IMR-90 (cell line): ENCODE measurements at regions of chr16 and their contacts with region 1.

Region 1: DNA sequence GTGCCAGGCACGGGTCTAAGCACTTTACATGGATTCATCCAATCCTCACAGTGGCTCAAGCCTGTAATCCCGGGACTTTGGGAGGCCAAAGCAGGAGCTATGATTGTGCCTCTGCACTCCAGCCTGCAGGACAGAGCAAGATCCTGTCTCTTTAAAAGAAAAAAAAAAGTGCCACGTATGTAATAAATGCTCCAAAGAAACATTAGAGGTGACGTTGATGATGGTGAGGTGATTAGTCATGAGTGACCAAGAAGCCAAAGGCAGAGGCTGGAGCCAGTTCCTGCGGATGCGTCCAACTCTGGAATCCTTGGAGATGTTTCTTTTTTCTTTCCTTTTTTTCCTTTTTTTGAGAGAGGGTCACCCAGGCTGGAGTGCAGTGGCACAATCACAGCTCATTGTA is 59.4 kb upstream of the SIAH1 start:
- DNase-seq: peak; percentile 94
- ATAC-seq: peak; percentile 87
- H3K4me3 ChIP-seq: no peak overlapping the region; the same call in 1 of the 2 replicates
- H3K27ac ChIP-seq: peak overlapping the region; percentile 85
- H3K4me1 ChIP-seq: peaks cover 6% of the 10 kb centered on the region
- H3K27me3 ChIP-seq: no peaks in the 10 kb centered on the region
- CTCF ChIP-seq: no peak
- POLR2A ChIP-seq: peak; percentile 44; the same call in 1 of the 2 replicates
- RAD21 ChIP-seq: no peak

Region 2: GRCh38 chr16:47110939-47111338 is 1333.6 kb before region 1 on chr16:
- CTCF ChIA-PET with region 1: no interaction called
- POLR2A ChIA-PET with region 1: interaction called, 15 read pairs
- dilution Hi-C with region 1: no loop called
- in situ Hi-C with region 1: no loop called
- intact Hi-C with region 1: no loop called
- DNase-seq: no peak
- ATAC-seq: no peak
- H3K4me3 ChIP-seq: no peak overlapping the region
- H3K27ac ChIP-seq: no peak overlapping the region
- H3K4me1 ChIP-seq: no peaks in the 10 kb centered on the region
- H3K27me3 ChIP-seq: no peaks in the 10 kb centered on the region
- CTCF ChIP-seq: no peak
- POLR2A ChIP-seq: no peak
- RAD21 ChIP-seq: no peak

Region 3: GRCh38 chr16:48409839-48410611 is 34.5 kb before region 1 on chr16:
- CTCF ChIA-PET with region 1: interaction called, 3 read pairs
- POLR2A ChIA-PET with region 1: no interaction called
- dilution Hi-C with region 1: no loop called
- in situ Hi-C with region 1: no loop called
- intact Hi-C with region 1: loop called (anchors 2 kb)
- DNase-seq: peak; percentile 96
- ATAC-seq: peak; percentile 93
- H3K4me3 ChIP-seq: no peak overlapping the region
- H3K27ac ChIP-seq: peak overlapping the region; percentile 76
- H3K4me1 ChIP-seq: peaks cover 14% of the 10 kb centered on the region
- H3K27me3 ChIP-seq: no peaks in the 10 kb centered on the region
- CTCF ChIP-seq: no peak
- POLR2A ChIP-seq: no peak
- RAD21 ChIP-seq: peak; percentile 21; the same call in 1 of the 2 replicates